Caco-2 (cell line): ENCODE measurements at regions of chr11 and their contacts with region 1.

Region 1: GRCh38 chr11:126268708-126269579 is at the starts of genes FOXRED1 and SRPRA:
- DNase-seq: peak; percentile 100
- H3K4me3 ChIP-seq: peak within 1 kb of the TSS; percentile 93
- H3K4me3 Mint-ChIP-seq: peak within 1 kb of the TSS; percentile 91
- H3K27ac Mint-ChIP-seq: peak within 1 kb of the TSS; percentile 91
- H3K4me1 ChIP-seq: peaks cover 6% of the 10 kb centered on the region
- H3K4me1 Mint-ChIP-seq: peaks cover 11% of the 10 kb centered on the region
- H3K27me3 ChIP-seq: no peaks in the 10 kb centered on the region
- H3K27me3 Mint-ChIP-seq: no peaks in the 10 kb centered on the region
- CTCF ChIP-seq: no peak
- total RNA-seq, gene FOXRED1: 91.7 and 94.3 TPM in 2 replicates
- total RNA-seq, gene SRPRA: 174 and 191 TPM in 2 replicates

Region 2: DNA sequence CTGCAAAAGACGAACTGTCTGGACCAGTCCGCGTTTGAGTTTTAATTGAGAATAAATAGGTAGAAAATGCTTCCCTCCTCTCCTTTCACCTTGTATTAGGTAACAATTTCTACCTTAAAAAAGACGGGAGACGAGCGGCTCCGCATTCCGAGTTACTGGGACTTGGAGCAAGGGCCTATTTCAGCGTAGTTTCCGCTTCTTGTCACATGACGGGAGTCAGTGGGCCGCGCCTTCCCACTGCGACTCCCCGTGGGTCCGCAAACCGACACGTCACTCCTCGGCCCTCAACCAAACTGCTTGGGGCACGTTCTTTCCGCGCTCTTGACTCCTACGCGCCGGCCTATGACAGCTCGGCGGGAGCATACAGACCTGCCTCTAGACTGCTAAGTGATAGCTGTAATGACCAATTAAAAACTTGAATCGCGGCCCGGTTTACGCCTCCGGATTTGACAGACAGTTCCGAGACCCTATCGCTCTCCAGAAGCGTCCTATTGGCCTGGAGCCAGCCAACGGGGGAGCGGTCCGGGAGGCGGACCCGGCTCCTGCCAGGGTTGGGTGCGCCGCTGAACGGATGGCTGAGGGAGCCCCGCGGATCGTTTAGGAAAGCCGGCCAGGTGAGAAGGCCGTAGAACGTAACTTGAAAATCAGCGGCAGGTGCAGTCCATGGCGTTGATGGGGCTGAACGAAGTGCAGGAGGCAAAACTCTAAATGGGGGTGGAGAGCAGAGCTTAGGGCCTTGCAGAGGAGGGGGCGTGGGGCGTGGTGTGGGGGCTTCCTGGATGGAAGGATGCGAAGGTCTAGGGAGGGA is 676.4 kb before region 1 on chr11 and contains the start of gene STT3A:
- CTCF ChIA-PET with region 1: no interaction called
- POLR2A ChIA-PET with region 1: no interaction called
- intact Hi-C with region 1: loop called (anchors 10 kb)
- DNase-seq: peak; percentile 100
- H3K4me3 ChIP-seq: peak within 1 kb of the TSS; percentile 85
- H3K4me3 Mint-ChIP-seq: peak within 1 kb of the TSS; percentile 98
- H3K27ac Mint-ChIP-seq: peak within 1 kb of the TSS; percentile 99
- H3K4me1 ChIP-seq: no peaks in the 10 kb centered on the region
- H3K4me1 Mint-ChIP-seq: peaks cover 22% of the 10 kb centered on the region
- H3K27me3 ChIP-seq: no peaks in the 10 kb centered on the region
- H3K27me3 Mint-ChIP-seq: no peaks in the 10 kb centered on the region
- CTCF ChIP-seq: no peak
- total RNA-seq, gene STT3A: 517 and 531 TPM in 2 replicates

Region 3: GRCh38 chr11:125923012-125923579 is 345.8 kb before region 1 on chr11:
- CTCF ChIA-PET with region 1: no interaction called
- POLR2A ChIA-PET with region 1: no interaction called
- intact Hi-C with region 1: loop called (anchors 5 kb)
- DNase-seq: peak; percentile 79 to 84
- H3K4me3 ChIP-seq: no peak overlapping the region
- H3K4me3 Mint-ChIP-seq: no peak overlapping the region
- H3K27ac Mint-ChIP-seq: no peak overlapping the region
- H3K4me1 ChIP-seq: no peaks in the 10 kb centered on the region
- H3K4me1 Mint-ChIP-seq: no peaks in the 10 kb centered on the region
- H3K27me3 ChIP-seq: 0 out of 2 replicates have a peak, but pooled peaks cover 2% of the 10 kb centered on the region
- H3K27me3 Mint-ChIP-seq: peaks cover 14% of the 10 kb centered on the region
- CTCF ChIP-seq: peak; percentile 95 to 98

Region 4: GRCh38 chr11:126062679-126063506 is 206.1 kb before region 1 on chr11 and contains the start of gene CDON:
- CTCF ChIA-PET with region 1: no interaction called
- POLR2A ChIA-PET with region 1: no interaction called
- intact Hi-C with region 1: loop called (anchors 2 kb)
- DNase-seq: peak; percentile 95 to 98
- H3K4me3 ChIP-seq: peak within 1 kb of the TSS; percentile 89
- H3K4me3 Mint-ChIP-seq: peak within 1 kb of the TSS; percentile 95
- H3K27ac Mint-ChIP-seq: peak within 1 kb of the TSS; percentile 100
- H3K4me1 ChIP-seq: peaks cover 8% of the 10 kb centered on the region
- H3K4me1 Mint-ChIP-seq: peaks cover 8% of the 10 kb centered on the region
- H3K27me3 ChIP-seq: no peaks in the 10 kb centered on the region
- H3K27me3 Mint-ChIP-seq: peaks cover 16% of the 10 kb centered on the region
- CTCF ChIP-seq: peak in 1 of 2 experiments; percentile 6
- total RNA-seq, gene CDON: 5.7 and 6.8 TPM in 2 replicates

Region 5: GRCh38 chr11:126211235-126212088 is 57.5 kb before region 1 on chr11 and contains the starts of genes FAM118B and RPUSD4:
- CTCF ChIA-PET with region 1: no interaction called
- POLR2A ChIA-PET with region 1: interaction called, 5 read pairs
- intact Hi-C with region 1: loop called (anchors 1 kb)
- DNase-seq: peak; percentile 100
- H3K4me3 ChIP-seq: peak within 1 kb of the TSS; percentile 87
- H3K4me3 Mint-ChIP-seq: peak within 1 kb of the TSS; percentile 95
- H3K27ac Mint-ChIP-seq: peak within 1 kb of the TSS; percentile 93
- H3K4me1 ChIP-seq: peaks cover 11% of the 10 kb centered on the region; the same call in 1 of the 2 replicates
- H3K4me1 Mint-ChIP-seq: peaks cover 19% of the 10 kb centered on the region
- H3K27me3 ChIP-seq: no peaks in the 10 kb centered on the region
- H3K27me3 Mint-ChIP-seq: no peaks in the 10 kb centered on the region
- CTCF ChIP-seq: no peak
- total RNA-seq, gene FAM118B: 36.5 and 44.3 TPM in 2 replicates
- total RNA-seq, gene RPUSD4: 74.2 and 74.3 TPM in 2 replicates

Region 6: DNA sequence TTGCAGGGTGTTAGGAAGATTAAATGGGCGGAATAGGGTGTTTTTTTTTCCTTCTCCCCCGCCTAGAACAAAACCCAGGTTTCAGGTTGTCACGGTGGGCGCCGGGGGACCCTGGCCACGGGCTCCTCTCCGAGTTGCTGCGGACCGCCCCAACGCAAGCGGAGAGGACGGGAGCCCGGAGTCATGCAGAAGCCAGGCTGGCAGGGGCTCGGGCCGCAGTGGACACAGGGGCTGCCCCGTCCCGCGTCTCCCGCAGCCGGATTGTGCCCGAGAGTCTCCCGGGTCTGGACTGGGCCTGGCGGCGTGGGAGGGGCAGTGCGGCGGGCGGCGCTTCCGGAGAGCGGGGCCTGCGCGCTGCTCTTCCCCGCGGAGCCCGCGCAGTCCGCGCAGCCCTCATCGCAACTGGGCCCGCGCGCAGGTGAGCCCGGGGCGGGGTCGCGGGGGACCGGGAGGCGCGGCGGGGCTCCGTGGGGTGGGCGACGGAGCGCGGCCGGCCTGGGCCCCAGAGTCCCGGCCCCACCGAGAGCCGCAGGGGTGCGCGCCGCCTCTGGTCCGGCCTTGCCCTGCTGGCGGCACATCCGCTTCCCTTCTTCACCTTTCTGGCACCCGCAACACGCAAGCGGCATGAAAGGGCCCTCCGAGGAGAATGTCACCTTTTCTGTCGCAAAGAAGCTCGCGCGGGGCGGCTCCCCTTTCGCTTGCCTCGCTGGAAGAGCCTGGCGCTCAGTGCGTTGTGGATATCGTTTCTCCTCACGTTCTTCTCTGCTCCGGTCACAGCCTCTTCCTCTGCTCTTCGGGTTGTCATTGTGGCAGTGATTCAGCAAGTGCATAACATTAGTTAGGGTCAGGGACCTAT is 14.0 kb after region 1 on chr11 and contains the start of gene TIRAP:
- CTCF ChIA-PET with region 1: no interaction called
- POLR2A ChIA-PET with region 1: interaction called, 14 read pairs
- intact Hi-C with region 1: loop called (anchors 1 kb)
- DNase-seq: peak; percentile 70 to 82
- H3K4me3 ChIP-seq: peak within 1 kb of the TSS; percentile 71
- H3K4me3 Mint-ChIP-seq: peak within 1 kb of the TSS; percentile 96
- H3K27ac Mint-ChIP-seq: peak within 1 kb of the TSS; percentile 80
- H3K4me1 ChIP-seq: peaks cover 7% of the 10 kb centered on the region
- H3K4me1 Mint-ChIP-seq: peaks cover 11% of the 10 kb centered on the region
- H3K27me3 ChIP-seq: no peaks in the 10 kb centered on the region
- H3K27me3 Mint-ChIP-seq: no peaks in the 10 kb centered on the region
- CTCF ChIP-seq: peak in 1 of 2 experiments; percentile 5
- total RNA-seq, gene TIRAP: 25.1 and 27.8 TPM in 2 replicates

Region 7: DNA sequence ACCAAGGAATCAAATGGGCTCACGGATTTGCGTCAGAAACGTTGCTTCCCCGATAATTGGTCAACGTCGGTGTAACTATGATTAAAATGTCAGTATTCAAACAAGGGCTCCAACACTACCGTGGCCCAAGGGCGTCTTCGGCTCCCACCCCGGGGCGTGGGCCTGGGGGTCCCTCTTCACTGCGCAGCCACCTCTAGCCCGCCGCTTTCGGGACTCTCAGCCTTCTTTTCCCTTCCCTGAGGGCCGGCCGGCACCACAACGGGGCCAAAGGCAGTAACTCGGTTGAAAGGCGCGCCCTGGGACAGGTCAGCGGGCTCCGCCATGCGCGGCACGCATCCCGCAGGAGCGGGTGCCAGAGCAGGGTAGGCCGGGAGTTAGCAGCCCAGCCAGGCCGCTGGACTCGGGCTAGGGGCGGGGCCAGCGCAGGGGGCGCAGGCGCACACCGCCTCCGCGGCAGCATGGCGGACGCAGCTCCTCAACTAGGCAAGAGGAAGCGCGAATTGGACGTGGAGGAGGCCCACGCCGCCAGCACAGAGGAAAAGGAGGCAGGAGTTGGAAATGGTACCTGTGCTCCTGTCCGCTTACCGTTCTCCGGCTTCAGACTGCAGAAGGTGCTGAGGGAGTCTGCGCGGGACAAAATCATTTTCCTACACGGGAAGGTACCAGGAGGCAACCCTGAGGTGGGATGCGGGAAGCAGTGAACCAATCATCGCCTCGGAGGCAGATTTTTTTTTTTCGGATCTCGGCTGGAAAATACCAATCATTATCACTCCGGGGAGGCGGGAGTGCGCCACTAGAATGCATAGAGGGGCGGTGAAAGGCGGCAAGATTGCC is 34.9 kb after region 1 on chr11 and contains the start of gene DCPS:
- CTCF ChIA-PET with region 1: interaction called, 3 read pairs
- POLR2A ChIA-PET with region 1: interaction called, 4 read pairs
- intact Hi-C with region 1: loop called (anchors 1 kb)
- DNase-seq: peak; percentile 94 to 99
- H3K4me3 ChIP-seq: peak within 1 kb of the TSS; percentile 83
- H3K4me3 Mint-ChIP-seq: peak within 1 kb of the TSS; percentile 96
- H3K27ac Mint-ChIP-seq: peak within 1 kb of the TSS; percentile 97
- H3K4me1 ChIP-seq: 0 out of 2 replicates have a peak, but pooled peaks cover 4% of the 10 kb centered on the region
- H3K4me1 Mint-ChIP-seq: peaks cover 12% of the 10 kb centered on the region
- H3K27me3 ChIP-seq: no peaks in the 10 kb centered on the region
- H3K27me3 Mint-ChIP-seq: no peaks in the 10 kb centered on the region
- CTCF ChIP-seq: no peak
- total RNA-seq, gene DCPS: 40.2 and 40.4 TPM in 2 replicates

Region 8: GRCh38 chr11:126341760-126342161 is 72.8 kb after region 1 on chr11:
- CTCF ChIA-PET with region 1: no interaction called
- POLR2A ChIA-PET with region 1: no interaction called
- intact Hi-C with region 1: no loop called
- DNase-seq: no peak
- H3K4me3 ChIP-seq: no peak overlapping the region
- H3K4me3 Mint-ChIP-seq: no peak overlapping the region
- H3K27ac Mint-ChIP-seq: no peak overlapping the region
- H3K4me1 ChIP-seq: peaks cover 7% of the 10 kb centered on the region; the same call in 1 of the 2 replicates
- H3K4me1 Mint-ChIP-seq: no peaks in the 10 kb centered on the region
- H3K27me3 ChIP-seq: no peaks in the 10 kb centered on the region
- H3K27me3 Mint-ChIP-seq: no peaks in the 10 kb centered on the region
- CTCF ChIP-seq: no peak

Region 9: DNA sequence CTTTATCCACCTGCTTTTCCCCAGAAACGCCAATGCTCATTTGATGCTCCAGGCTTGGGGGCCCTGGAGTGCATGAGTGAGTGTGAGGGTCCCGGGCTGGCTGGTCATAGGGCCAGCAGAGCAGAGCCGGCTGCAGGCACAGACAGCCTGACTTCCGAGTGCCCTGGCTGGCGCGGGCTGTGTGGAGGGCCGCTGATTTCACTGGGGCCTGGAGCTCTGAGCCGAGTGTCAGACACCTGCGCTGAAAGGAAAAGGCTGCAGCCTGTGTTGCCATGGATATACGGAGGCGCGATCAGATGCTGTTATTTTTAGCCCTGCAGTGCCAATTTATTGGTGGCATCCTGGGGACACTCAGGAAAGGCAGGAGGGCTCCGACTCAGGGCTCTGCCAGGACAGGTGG is 174.2 kb after region 1 on chr11:
- CTCF ChIA-PET with region 1: no interaction called
- POLR2A ChIA-PET with region 1: no interaction called
- intact Hi-C with region 1: no loop called
- DNase-seq: no peak
- H3K4me3 ChIP-seq: no peak overlapping the region
- H3K4me3 Mint-ChIP-seq: no peak overlapping the region
- H3K27ac Mint-ChIP-seq: no peak overlapping the region
- H3K4me1 ChIP-seq: no peaks in the 10 kb centered on the region; the same call in 1 of the 2 replicates
- H3K4me1 Mint-ChIP-seq: peaks cover 7% of the 10 kb centered on the region
- H3K27me3 ChIP-seq: peaks cover 4% of the 10 kb centered on the region
- H3K27me3 Mint-ChIP-seq: peaks cover 49% of the 10 kb centered on the region
- CTCF ChIP-seq: no peak